CD8-positive, alpha-beta T cell (primary cell): ENCODE measurements at regions of chr19 and their contacts with region 1.

Region 1: DNA sequence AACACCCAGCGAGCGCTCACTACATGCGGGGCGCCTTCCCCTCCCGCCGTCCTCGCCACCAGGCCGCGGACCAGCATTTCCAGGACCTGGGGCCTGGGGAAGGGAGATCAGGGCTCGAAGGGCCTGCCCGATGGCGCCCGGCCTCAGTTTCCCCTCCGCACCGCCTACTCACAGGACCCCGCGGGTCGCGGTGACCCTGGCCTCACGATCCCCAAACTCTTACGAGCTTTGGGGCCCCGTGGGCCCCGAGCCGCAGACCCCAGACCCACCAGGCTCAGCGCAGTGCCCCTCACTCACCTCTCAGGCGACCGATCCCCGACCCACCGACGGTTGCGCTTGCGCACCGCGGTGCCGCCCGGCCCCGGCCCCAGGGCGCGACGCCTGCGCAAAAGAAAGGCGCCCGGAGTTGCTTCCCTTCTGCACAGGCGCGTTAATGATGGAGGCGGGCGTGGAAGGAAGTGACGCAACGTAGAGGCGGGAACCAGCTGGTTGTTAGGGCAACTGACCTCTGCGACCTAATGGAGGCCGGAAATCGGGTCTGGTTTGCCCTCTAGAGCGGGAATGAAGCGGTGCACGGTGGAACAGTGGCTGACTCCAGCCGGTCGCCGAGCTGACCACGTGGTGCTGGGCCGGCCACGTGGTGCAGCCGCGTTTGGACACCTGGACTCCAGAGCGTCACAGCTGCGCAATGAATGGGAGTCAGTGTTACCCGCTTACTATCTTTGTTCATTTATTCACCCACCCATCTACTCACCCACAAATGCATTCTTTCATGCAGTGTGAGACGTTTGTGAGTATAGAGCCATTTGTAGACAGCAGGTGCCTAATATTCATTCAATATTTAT is at the start of gene SGTA:
- DNase-seq: peak; percentile 91 to 99 (median 96)
- ATAC-seq: peak; percentile 62
- H3K4me3 ChIP-seq: peak within 1 kb of the TSS; percentile 94 to 98
- H3K4me3 Mint-ChIP-seq: peak within 1 kb of the TSS; percentile 86
- H3K27ac ChIP-seq: peak within 1 kb of the TSS; percentile 89 to 94
- H3K27ac Mint-ChIP-seq: peak within 1 kb of the TSS; percentile 92
- H3K4me1 ChIP-seq: peaks cover 41% of the 10 kb centered on the region
- H3K4me1 Mint-ChIP-seq: peaks cover 52% of the 10 kb centered on the region
- H3K27me3 ChIP-seq: no peaks in the 10 kb centered on the region
- H3K27me3 Mint-ChIP-seq: no peaks in the 10 kb centered on the region
- CTCF ChIP-seq: no peak
- total RNA-seq, gene SGTA: 38.2 to 38.9 TPM

Region 2: GRCh38 chr19:2164020-2164998 is 618.8 kb before region 1 on chr19:
- CTCF ChIA-PET with region 1: no interaction called
- POLR2A ChIA-PET with region 1: no interaction called
- intact Hi-C with region 1: loop called in 1 of 2 experiments (anchors 5 kb)
- DNase-seq: no peak
- ATAC-seq: peak; percentile 41
- H3K4me3 ChIP-seq: peak overlapping the region; percentile 67
- H3K4me3 Mint-ChIP-seq: peak overlapping the region; percentile 86
- H3K27ac ChIP-seq: peak overlapping the region; percentile 48 to 76
- H3K27ac Mint-ChIP-seq: peak overlapping the region; percentile 18
- H3K4me1 ChIP-seq: peaks cover 33% of the 10 kb centered on the region
- H3K4me1 Mint-ChIP-seq: peaks cover 26% of the 10 kb centered on the region
- H3K27me3 ChIP-seq: peaks cover 0 to 2% of the 10 kb centered on the region in 2 experiments
- H3K27me3 Mint-ChIP-seq: no peaks in the 10 kb centered on the region
- CTCF ChIP-seq: no peak

Region 3: GRCh38 chr19:2455851-2456570 is 327.1 kb before region 1 on chr19:
- CTCF ChIA-PET with region 1: no interaction called
- POLR2A ChIA-PET with region 1: no interaction called
- intact Hi-C with region 1: loop called (anchors 1 to 2 kb)
- DNase-seq: peak in 7 of 9 experiments; percentile 22 to 87 (median 52)
- ATAC-seq: peak; percentile 41
- H3K4me3 ChIP-seq: peak overlapping the region; percentile 62 to 80
- H3K4me3 Mint-ChIP-seq: peak overlapping the region; percentile 83
- H3K27ac ChIP-seq: peak overlapping the region; percentile 32 to 50
- H3K27ac Mint-ChIP-seq: peak overlapping the region; percentile 75
- H3K4me1 ChIP-seq: peaks cover 14% of the 10 kb centered on the region
- H3K4me1 Mint-ChIP-seq: peaks cover 13% of the 10 kb centered on the region
- H3K27me3 ChIP-seq: no peaks in the 10 kb centered on the region
- H3K27me3 Mint-ChIP-seq: no peaks in the 10 kb centered on the region
- CTCF ChIP-seq: no peak

Region 4: GRCh38 chr19:2739602-2740313 is 43.4 kb before region 1 on chr19 and contains the start of gene SLC39A3:
- CTCF ChIA-PET with region 1: no interaction called
- POLR2A ChIA-PET with region 1: interaction called, 4 read pairs
- intact Hi-C with region 1: loop called (anchors 1 kb)
- DNase-seq: peak; percentile 98 to 99 (median 99)
- ATAC-seq: peak; percentile 100
- H3K4me3 ChIP-seq: peak within 1 kb of the TSS; percentile 80 to 93
- H3K4me3 Mint-ChIP-seq: peak within 1 kb of the TSS; percentile 86
- H3K27ac ChIP-seq: peak within 1 kb of the TSS; percentile 38 to 45
- H3K27ac Mint-ChIP-seq: no peak within 1 kb of the TSS
- H3K4me1 ChIP-seq: peaks cover 9% of the 10 kb centered on the region
- H3K4me1 Mint-ChIP-seq: peaks cover 24% of the 10 kb centered on the region
- H3K27me3 ChIP-seq: peaks cover 0 to 7% of the 10 kb centered on the region in 2 experiments
- H3K27me3 Mint-ChIP-seq: peaks cover 15% of the 10 kb centered on the region
- CTCF ChIP-seq: no peak
- total RNA-seq, gene SLC39A3: 11.7 to 12.0 TPM

Region 5: GRCh38 chr19:2840794-2841790 is 57.9 kb after region 1 on chr19 and contains the start of gene ZNF555:
- CTCF ChIA-PET with region 1: interaction called, 3 read pairs
- POLR2A ChIA-PET with region 1: interaction called, 4 read pairs
- intact Hi-C with region 1: loop called (anchors 1 kb)
- DNase-seq: peak; percentile 97 to 100 (median 98)
- ATAC-seq: peak; percentile 92
- H3K4me3 ChIP-seq: peak within 1 kb of the TSS; percentile 68 to 82
- H3K4me3 Mint-ChIP-seq: peak within 1 kb of the TSS; percentile 95
- H3K27ac ChIP-seq: peak within 1 kb of the TSS; percentile 67 to 85
- H3K27ac Mint-ChIP-seq: peak within 1 kb of the TSS; percentile 90
- H3K4me1 ChIP-seq: peaks cover 13% of the 10 kb centered on the region
- H3K4me1 Mint-ChIP-seq: peaks cover 23% of the 10 kb centered on the region
- H3K27me3 ChIP-seq: no peaks in the 10 kb centered on the region
- H3K27me3 Mint-ChIP-seq: no peaks in the 10 kb centered on the region
- CTCF ChIP-seq: peak; percentile 39
- total RNA-seq, gene ZNF555: 2.6 to 2.8 TPM

Region 6: DNA sequence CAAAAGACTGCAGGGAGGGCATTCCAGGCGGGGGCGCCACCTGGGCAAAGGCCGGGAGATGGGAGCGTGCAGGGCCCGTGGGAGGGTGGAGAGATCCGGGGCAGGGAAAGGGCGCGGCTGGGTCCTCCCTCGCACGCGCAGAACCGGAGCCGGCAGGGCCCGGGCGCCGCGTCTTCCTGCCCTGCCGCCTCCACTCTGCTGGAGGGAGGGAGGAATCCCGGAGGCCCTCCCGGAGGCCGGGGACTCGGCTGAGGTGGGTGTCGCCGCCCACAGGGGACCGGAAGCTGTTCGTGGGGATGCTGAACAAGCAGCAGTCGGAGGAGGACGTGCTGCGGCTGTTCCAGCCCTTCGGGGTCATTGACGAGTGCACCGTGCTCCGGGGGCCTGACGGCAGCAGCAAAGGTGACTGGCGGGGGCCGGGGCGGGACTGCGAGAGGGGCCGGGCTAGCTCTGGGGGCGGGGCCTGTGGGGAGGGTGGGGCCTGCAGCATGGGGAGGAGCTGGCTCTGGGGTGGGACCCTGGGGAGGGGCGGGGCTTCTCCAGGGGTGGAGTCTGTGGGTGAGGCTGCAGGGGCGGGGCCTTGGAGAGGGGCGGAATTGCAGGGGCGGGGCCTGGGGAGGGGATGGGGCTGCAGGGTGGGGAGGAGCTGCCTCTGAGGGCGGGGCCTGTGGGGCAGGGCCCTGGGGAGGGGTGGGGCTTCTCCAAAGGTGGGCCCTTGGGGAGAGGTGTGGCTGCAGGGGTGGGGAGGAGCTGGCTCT is 492.6 kb after region 1 on chr19:
- CTCF ChIA-PET with region 1: no interaction called
- POLR2A ChIA-PET with region 1: no interaction called
- intact Hi-C with region 1: loop called (anchors 2 to 10 kb)
- DNase-seq: peak; percentile 84 to 98 (median 93)
- ATAC-seq: peak; percentile 79
- H3K4me3 ChIP-seq: peak overlapping the region; percentile 59 to 84
- H3K4me3 Mint-ChIP-seq: peak overlapping the region; percentile 86
- H3K27ac ChIP-seq: peak overlapping the region; percentile 34 to 63
- H3K27ac Mint-ChIP-seq: peak overlapping the region; percentile 70
- H3K4me1 ChIP-seq: peaks cover 18% of the 10 kb centered on the region
- H3K4me1 Mint-ChIP-seq: peaks cover 17% of the 10 kb centered on the region
- H3K27me3 ChIP-seq: peaks cover 0 to 2% of the 10 kb centered on the region in 2 experiments
- H3K27me3 Mint-ChIP-seq: peaks cover 6% of the 10 kb centered on the region
- CTCF ChIP-seq: peak; percentile 14